Mammary epithelial cell (primary cell): ENCODE measurements at regions of chr19 and their contacts with region 1.

Region 1: GRCh38 chr19:48713864-48714758 is 5.4 kb downstream of the MAMSTR start:
- DNase-seq: peak; percentile 100
- H3K4me3 ChIP-seq: peak overlapping the region; percentile 75 to 94 (median 76)
- H3K27ac ChIP-seq: peak overlapping the region; percentile 44
- H3K4me1 ChIP-seq: peaks cover 24% of the 10 kb centered on the region
- H3K27me3 ChIP-seq: no peaks in the 10 kb centered on the region
- CTCF ChIP-seq: no peak

Region 2: GRCh38 chr19:48618916-48619691 is 95.0 kb before region 1 on chr19 and contains the starts of genes RPL18 and SPHK2:
- CTCF ChIA-PET with region 1: no interaction called
- dilution Hi-C with region 1: no loop called
- in situ Hi-C with region 1: no loop called
- intact Hi-C with region 1: no loop called
- DNase-seq: peak; percentile 100
- H3K4me3 ChIP-seq: peak within 1 kb of the TSS; percentile 92 to 94 (median 94)
- H3K27ac ChIP-seq: peak within 1 kb of the TSS; percentile 88
- H3K4me1 ChIP-seq: peaks cover 48% of the 10 kb centered on the region
- H3K27me3 ChIP-seq: no peaks in the 10 kb centered on the region
- CTCF ChIP-seq: no peak
- total RNA-seq, gene RPL18: 1,261 to 1,652 TPM
- total RNA-seq, gene SPHK2: 4.0 to 15.7 TPM

Region 3: GRCh38 chr19:48698046-48698445 is 16.1 kb before region 1 on chr19:
- CTCF ChIA-PET with region 1: no interaction called
- dilution Hi-C with region 1: no loop called
- in situ Hi-C with region 1: no loop called
- intact Hi-C with region 1: loop called (anchors 2 kb)
- DNase-seq: peak; percentile 37
- H3K4me3 ChIP-seq: no peak overlapping the region
- H3K27ac ChIP-seq: no peak overlapping the region
- H3K4me1 ChIP-seq: peaks cover 8% of the 10 kb centered on the region
- H3K27me3 ChIP-seq: peaks cover 4% of the 10 kb centered on the region
- CTCF ChIP-seq: no peak

Region 4: GRCh38 chr19:48738557-48739399 is 24.7 kb after region 1 on chr19:
- CTCF ChIA-PET with region 1: no interaction called
- dilution Hi-C with region 1: no loop called
- in situ Hi-C with region 1: no loop called
- intact Hi-C with region 1: loop called (anchors 2 kb)
- DNase-seq: peak; percentile 86
- H3K4me3 ChIP-seq: peak overlapping the region; percentile 9 to 49 (median 49)
- H3K27ac ChIP-seq: no peak overlapping the region
- H3K4me1 ChIP-seq: peaks cover 6% of the 10 kb centered on the region
- H3K27me3 ChIP-seq: no peaks in the 10 kb centered on the region
- CTCF ChIP-seq: peak in 1 of 2 donors; percentile 34

Region 5: GRCh38 chr19:48752498-48753365 is 38.6 kb after region 1 on chr19 and contains the start of gene FUT1:
- CTCF ChIA-PET with region 1: no interaction called
- dilution Hi-C with region 1: no loop called
- in situ Hi-C with region 1: no loop called
- intact Hi-C with region 1: loop called (anchors 1 kb)
- DNase-seq: peak; percentile 97
- H3K4me3 ChIP-seq: peak within 1 kb of the TSS; percentile 68 to 85 (median 81)
- H3K27ac ChIP-seq: peak within 1 kb of the TSS; percentile 51
- H3K4me1 ChIP-seq: peaks cover 4% of the 10 kb centered on the region
- H3K27me3 ChIP-seq: no peaks in the 10 kb centered on the region
- CTCF ChIP-seq: peak in 1 of 2 donors; percentile 5
- total RNA-seq, gene FUT1: 13.9 to 15.2 TPM

Region 6: DNA sequence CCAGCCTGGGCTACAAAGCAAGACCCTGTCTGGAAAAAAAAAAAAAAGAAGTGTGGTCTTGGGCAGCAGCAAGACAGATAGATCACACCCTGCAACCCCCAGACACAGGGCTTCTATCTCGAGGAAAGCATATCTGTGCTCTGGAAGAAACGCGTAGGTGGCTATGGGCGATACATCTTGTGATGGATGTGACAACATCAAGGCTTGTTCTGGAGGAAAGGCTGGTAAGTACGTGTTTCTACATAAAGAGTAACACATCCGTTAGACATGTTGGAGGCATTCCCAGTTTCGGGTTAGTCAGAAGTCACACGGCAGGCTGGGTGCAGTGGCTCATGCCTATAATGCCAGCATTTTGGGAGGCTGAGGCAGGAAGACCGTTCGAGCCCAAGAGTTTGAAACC is 212.8 kb after region 1 on chr19:
- CTCF ChIA-PET with region 1: no interaction called
- dilution Hi-C with region 1: no loop called
- in situ Hi-C with region 1: no loop called
- intact Hi-C with region 1: no loop called
- DNase-seq: peak; percentile 99
- H3K4me3 ChIP-seq: no peak overlapping the region
- H3K27ac ChIP-seq: peak overlapping the region; percentile 92
- H3K4me1 ChIP-seq: peaks cover 23% of the 10 kb centered on the region
- H3K27me3 ChIP-seq: no peaks in the 10 kb centered on the region
- CTCF ChIP-seq: no peak